CD4-positive, alpha-beta T cell (primary cell): ENCODE measurements at regions of chr12 and their contacts with region 1.

Region 1: DNA sequence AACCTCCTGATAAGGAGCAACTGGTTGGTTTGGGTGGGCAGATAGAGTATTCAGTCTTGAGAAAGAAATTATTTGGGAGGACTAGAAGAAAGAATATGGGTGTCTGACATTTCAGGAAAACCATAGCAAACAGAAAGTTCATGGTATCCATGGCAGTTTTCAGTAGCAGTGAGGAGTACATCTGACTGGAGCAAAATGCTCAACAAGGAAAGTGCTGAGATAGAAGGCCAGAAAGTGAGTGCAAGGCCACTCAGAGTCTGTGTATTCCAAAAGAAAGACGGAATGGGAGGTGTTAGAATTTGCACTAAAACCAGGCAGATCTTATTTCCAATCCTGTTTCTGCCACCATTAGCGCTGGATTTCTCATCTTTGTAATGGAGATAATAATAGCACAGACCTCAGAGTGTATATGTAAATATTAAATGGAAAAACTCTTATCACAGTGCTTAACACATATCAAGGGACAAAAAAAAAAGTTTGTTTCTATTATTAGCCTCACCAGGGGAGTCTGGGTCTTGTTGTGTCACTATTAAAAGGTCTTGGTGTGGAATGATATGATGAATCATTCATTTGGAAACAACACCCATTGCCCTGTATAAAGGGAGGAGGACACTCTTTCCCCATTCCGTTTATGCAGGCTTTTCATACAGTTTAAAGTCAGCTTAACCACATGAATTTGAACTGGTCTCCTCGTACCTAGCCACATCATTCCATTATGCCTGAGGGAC is 349.8 kb downstream of the IPO8 start:
- DNase-seq: no peak
- ATAC-seq: no peak
- H3K4me3 ChIP-seq: no peak overlapping the region
- H3K4me3 Mint-ChIP-seq: no peak overlapping the region
- H3K27ac ChIP-seq: no peak overlapping the region
- H3K27ac Mint-ChIP-seq: no peak overlapping the region
- H3K4me1 ChIP-seq: no peaks in the 10 kb centered on the region
- H3K4me1 Mint-ChIP-seq: no peaks in the 10 kb centered on the region
- H3K27me3 ChIP-seq: no peaks in the 10 kb centered on the region
- H3K27me3 Mint-ChIP-seq: no peaks in the 10 kb centered on the region
- CTCF ChIP-seq: no peak

Region 2: GRCh38 chr12:30251546-30251945 is 94.4 kb before region 1 on chr12:
- CTCF ChIA-PET with region 1: no interaction called
- POLR2A ChIA-PET with region 1: no interaction called
- intact Hi-C with region 1: loop called in 1 of 2 experiments (anchors 1 kb)
- DNase-seq: no peak
- ATAC-seq: no peak
- H3K4me3 ChIP-seq: no peak overlapping the region
- H3K4me3 Mint-ChIP-seq: no peak overlapping the region
- H3K27ac ChIP-seq: no peak overlapping the region
- H3K27ac Mint-ChIP-seq: no peak overlapping the region
- H3K4me1 ChIP-seq: no peaks in the 10 kb centered on the region
- H3K4me1 Mint-ChIP-seq: no peaks in the 10 kb centered on the region
- H3K27me3 ChIP-seq: no peaks in the 10 kb centered on the region
- H3K27me3 Mint-ChIP-seq: no peaks in the 10 kb centered on the region
- CTCF ChIP-seq: no peak

Region 3: GRCh38 chr12:30329281-30329680 is 16.6 kb before region 1 on chr12:
- CTCF ChIA-PET with region 1: no interaction called
- POLR2A ChIA-PET with region 1: no interaction called
- intact Hi-C with region 1: no loop called
- DNase-seq: no peak
- ATAC-seq: no peak
- H3K4me3 ChIP-seq: no peak overlapping the region
- H3K4me3 Mint-ChIP-seq: no peak overlapping the region
- H3K27ac ChIP-seq: no peak overlapping the region
- H3K27ac Mint-ChIP-seq: no peak overlapping the region
- H3K4me1 ChIP-seq: no peaks in the 10 kb centered on the region
- H3K4me1 Mint-ChIP-seq: no peaks in the 10 kb centered on the region
- H3K27me3 ChIP-seq: no peaks in the 10 kb centered on the region
- H3K27me3 Mint-ChIP-seq: no peaks in the 10 kb centered on the region
- CTCF ChIP-seq: no peak

Region 4: DNA sequence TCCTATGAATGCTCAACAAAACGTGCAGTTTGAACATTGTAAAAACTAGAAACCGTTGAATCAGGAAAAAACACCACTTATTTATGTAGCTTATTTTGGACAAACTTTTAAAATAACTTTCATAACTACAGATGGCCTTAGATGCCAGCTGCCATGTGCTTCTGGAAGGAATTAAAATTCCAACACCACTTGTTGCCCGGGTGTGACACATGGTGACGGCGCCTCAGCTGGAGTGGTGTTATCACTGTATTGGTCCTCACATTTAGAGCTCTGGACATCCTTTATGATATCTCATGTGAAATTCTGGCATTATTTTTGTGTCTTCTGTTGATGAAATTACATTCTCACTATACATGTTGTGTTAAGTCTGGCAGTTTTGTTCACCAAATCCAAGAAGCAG is 138.8 kb after region 1 on chr12:
- CTCF ChIA-PET with region 1: no interaction called
- POLR2A ChIA-PET with region 1: no interaction called
- intact Hi-C with region 1: no loop called
- DNase-seq: no peak
- ATAC-seq: no peak
- H3K4me3 ChIP-seq: no peak overlapping the region
- H3K4me3 Mint-ChIP-seq: no peak overlapping the region
- H3K27ac ChIP-seq: no peak overlapping the region
- H3K27ac Mint-ChIP-seq: no peak overlapping the region
- H3K4me1 ChIP-seq: no peaks in the 10 kb centered on the region
- H3K4me1 Mint-ChIP-seq: no peaks in the 10 kb centered on the region
- H3K27me3 ChIP-seq: no peaks in the 10 kb centered on the region
- H3K27me3 Mint-ChIP-seq: no peaks in the 10 kb centered on the region
- CTCF ChIP-seq: no peak